Heart right ventricle (tissue), 16 donors: ENCODE measurements at regions of chr7 and their contacts with region 1.

Region 1: DNA sequence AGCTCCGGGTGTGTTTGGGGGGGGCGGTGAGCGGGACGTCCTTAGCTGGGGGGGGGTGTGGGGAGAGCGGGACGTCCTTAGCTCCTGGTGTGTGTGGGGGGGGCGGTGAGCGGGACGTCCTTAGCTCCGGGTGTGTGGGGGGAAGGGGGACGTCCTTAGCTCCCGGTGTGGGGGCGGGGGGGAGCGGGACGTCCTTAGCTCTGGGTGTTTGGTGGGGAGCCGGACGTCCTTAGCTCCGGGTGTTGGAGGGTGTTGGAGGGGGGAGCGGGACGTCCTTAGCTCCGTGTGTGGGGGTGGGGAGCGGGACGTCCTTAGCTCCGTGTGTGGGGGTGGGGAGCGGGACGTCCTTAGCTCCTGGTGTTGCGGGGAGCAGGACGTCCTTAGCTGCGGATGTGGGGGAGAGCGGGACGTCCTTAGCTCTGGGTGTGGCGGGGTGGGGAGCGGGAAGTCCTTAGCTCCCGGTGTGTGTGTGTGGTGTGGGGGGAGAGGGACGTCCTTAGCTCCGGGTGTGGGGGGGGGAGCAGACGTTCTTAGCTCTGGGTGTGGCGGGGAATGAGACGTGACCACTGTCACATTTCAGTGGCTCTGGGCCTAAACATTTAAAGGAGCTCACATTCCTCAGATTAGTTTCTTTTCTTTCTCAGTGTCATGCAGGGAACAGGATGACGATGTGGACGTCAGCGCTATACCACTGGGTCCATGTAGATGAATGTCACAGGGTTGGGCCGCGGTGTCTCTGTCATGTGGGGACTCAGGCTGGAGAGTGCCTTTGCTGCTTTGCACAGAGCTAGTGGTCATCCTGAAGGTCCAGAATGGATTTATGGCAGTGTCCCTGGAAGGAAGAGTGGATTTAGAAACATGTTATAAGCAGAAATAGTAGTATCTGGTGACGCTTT is 7.5 kb downstream of the DYNC2I1 start:
- DNase-seq: peak; percentile 80 to 84
- ATAC-seq: peak; percentile 87 to 93 (median 90)
- H3K4me3 ChIP-seq: peak overlapping the region in 9 of 10 donors; percentile 30 to 55 (median 51)
- H3K27ac ChIP-seq: peak overlapping the region; percentile 85 to 98 (median 92)
- H3K4me1 ChIP-seq: peaks cover 15 to 64% (median 36%) of the 10 kb centered on the region in 9 donors
- H3K27me3 ChIP-seq: no peaks in the 10 kb centered on the region
- CTCF ChIP-seq: no peak

Region 2: GRCh38 chr7:158695726-158696452 is 168.0 kb before region 1 on chr7:
- intact Hi-C with region 1: loop called in 1 of 10 experiments (anchors 10 kb)
- DNase-seq: peak in 1 of 2 donors; percentile 83
- ATAC-seq: peak; percentile 93 to 99 (median 98)
- H3K4me3 ChIP-seq: peak overlapping the region in 3 of 10 donors; percentile 2 to 28 (median 9)
- H3K27ac ChIP-seq: peak overlapping the region in 7 of 10 donors; percentile 8 to 60 (median 45)
- H3K4me1 ChIP-seq: peaks cover 0 to 12% (median 6%) of the 10 kb centered on the region in 9 donors
- H3K27me3 ChIP-seq: no peaks in the 10 kb centered on the region
- CTCF ChIP-seq: peak; percentile 31 to 83 (median 77)

Region 3: GRCh38 chr7:158818325-158819213 is 45.3 kb before region 1 on chr7:
- intact Hi-C with region 1: loop called in 2 of 10 experiments (anchors 5 kb)
- DNase-seq: peak; percentile 83 to 91
- ATAC-seq: peak; percentile 82 to 94 (median 88)
- H3K4me3 ChIP-seq: peak overlapping the region in 9 of 10 donors; percentile 2 to 41 (median 36)
- H3K27ac ChIP-seq: peak overlapping the region; percentile 90 to 94 (median 92)
- H3K4me1 ChIP-seq: peaks cover 35 to 95% (median 88%) of the 10 kb centered on the region in 9 donors
- H3K27me3 ChIP-seq: no peaks in the 10 kb centered on the region
- CTCF ChIP-seq: peak in 2 of 9 donors; percentile 11 to 23